Endothelial cell of umbilical vein (primary cell): ENCODE measurements at regions of chr5 and their contacts with region 1.

Region 1: DNA sequence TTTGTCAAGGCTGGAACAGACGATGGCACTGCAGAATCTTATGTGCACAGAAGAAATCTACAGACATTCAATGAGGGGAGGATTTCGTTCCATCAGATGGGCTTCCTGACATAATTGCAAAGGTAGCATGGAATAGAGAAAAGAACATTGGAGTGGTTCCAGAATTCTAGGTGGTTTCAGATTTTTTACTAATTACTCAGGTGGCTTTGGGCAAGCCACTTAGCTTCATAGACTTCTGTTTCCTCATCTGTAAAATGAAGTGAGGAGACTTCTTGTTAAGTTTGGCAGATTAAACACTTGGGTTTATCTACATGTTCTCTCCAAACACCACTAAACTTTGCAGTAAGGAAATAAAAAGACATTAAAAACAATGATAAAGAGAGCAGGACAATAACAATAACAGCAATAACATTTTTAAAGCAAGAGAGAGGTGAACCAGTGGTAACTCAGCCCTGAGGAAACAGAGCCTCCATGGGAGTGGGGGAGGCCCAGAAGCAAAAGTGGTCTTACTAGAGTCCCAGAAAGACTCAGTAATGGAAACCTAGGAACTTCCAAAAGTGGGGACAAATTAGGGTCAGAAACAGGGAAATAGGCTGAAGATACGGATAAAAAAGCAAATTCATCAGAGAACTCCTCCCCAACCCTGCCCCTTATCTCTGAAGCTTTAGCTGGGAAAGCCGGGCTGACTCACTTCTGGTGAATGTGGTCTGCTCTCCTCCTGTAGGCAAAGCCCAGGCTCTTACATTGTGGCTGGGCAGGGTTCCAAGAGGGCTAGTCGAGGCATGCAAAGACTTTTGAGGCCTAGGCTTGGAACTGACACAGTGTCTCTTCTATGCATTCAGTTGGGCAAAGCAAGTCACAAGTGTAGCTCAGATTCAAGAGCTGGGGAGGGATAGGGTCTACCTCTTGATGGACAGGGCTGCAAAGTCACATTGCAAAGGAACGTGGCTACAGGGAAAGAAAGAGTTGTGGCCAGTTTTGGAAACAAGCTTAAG is 11.8 kb upstream of the ACTBL2 start:
- DNase-seq: peak; percentile 93
- H3K4me3 ChIP-seq: no peak overlapping the region
- H3K27ac ChIP-seq: peak overlapping the region; percentile 92
- H3K4me1 ChIP-seq: peaks cover 48% of the 10 kb centered on the region
- H3K27me3 ChIP-seq: no peaks in the 10 kb centered on the region
- CTCF ChIP-seq: no peak
- POLR2A ChIP-seq: no peak

Region 2: GRCh38 chr5:57383093-57383861 is 111.1 kb before region 1 on chr5:
- CTCF ChIA-PET with region 1: interaction called, 10 read pairs
- POLR2A ChIA-PET with region 1: interaction called, 3 read pairs
- dilution Hi-C with region 1: no loop called
- intact Hi-C with region 1: loop called (anchors 1 kb)
- DNase-seq: peak; percentile 96
- H3K4me3 ChIP-seq: peak overlapping the region in 1 of 3 experiments; percentile 40
- H3K27ac ChIP-seq: peak overlapping the region; percentile 94
- H3K4me1 ChIP-seq: peaks cover 19% of the 10 kb centered on the region
- H3K27me3 ChIP-seq: no peaks in the 10 kb centered on the region
- CTCF ChIP-seq: peak in 1 of 2 donors; percentile 33
- POLR2A ChIP-seq: peak; percentile 60

Region 3: DNA sequence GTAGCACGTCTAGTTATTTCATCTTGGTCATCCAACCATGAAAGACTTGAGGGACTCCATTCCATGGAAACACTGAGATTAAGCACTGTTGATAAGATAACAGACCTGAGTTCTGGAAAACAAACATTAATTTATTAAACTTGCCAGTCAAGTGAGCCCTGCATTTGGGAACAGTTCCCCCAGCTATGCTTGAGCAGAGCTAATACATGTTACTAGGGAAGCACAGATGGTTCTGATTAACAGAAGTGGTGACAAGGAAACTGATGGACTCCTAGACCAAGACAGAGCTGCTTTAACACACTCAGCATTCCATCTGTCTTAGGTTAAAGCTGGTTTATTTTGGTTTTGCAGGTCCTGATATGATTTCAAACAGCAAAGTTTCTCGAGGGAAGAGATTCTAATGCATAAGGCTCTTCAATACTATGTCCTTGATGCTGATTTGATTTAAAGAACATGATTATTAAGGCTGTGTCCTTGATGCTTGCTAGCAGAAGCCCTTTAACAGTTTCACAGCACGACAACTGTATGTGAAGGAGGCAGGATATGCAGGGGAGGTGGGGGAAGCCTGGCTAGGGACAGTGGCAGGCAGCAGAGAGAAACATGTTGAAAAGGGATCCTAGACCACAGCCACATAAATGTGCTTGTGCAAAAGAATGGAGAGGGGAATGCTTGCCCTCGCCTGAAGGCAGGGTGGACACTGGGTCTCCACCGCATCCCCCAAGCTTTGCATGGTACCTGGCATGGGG is 78.0 kb before region 1 on chr5:
- CTCF ChIA-PET with region 1: no interaction called
- POLR2A ChIA-PET with region 1: no interaction called
- dilution Hi-C with region 1: no loop called
- intact Hi-C with region 1: no loop called
- DNase-seq: no peak
- H3K4me3 ChIP-seq: no peak overlapping the region
- H3K27ac ChIP-seq: no peak overlapping the region
- H3K4me1 ChIP-seq: no peaks in the 10 kb centered on the region
- H3K27me3 ChIP-seq: no peaks in the 10 kb centered on the region
- CTCF ChIP-seq: no peak
- POLR2A ChIP-seq: no peak

Region 4: GRCh38 chr5:58188262-58188651 is 693.9 kb after region 1 on chr5:
- CTCF ChIA-PET with region 1: interaction called, 7 read pairs
- POLR2A ChIA-PET with region 1: no interaction called
- dilution Hi-C with region 1: no loop called
- intact Hi-C with region 1: loop called (anchors 1 kb)
- DNase-seq: peak; percentile 75
- H3K4me3 ChIP-seq: no peak overlapping the region
- H3K27ac ChIP-seq: peak overlapping the region; percentile 39
- H3K4me1 ChIP-seq: peaks cover 18% of the 10 kb centered on the region
- H3K27me3 ChIP-seq: no peaks in the 10 kb centered on the region
- CTCF ChIP-seq: no peak
- POLR2A ChIP-seq: no peak